Activated CD4-positive, alpha-beta T cell treated with anti-CD3 and anti-CD28 coated beads for 36 hours (primary cell): ENCODE measurements at regions of chr7 and their contacts with region 1.

Region 1: DNA sequence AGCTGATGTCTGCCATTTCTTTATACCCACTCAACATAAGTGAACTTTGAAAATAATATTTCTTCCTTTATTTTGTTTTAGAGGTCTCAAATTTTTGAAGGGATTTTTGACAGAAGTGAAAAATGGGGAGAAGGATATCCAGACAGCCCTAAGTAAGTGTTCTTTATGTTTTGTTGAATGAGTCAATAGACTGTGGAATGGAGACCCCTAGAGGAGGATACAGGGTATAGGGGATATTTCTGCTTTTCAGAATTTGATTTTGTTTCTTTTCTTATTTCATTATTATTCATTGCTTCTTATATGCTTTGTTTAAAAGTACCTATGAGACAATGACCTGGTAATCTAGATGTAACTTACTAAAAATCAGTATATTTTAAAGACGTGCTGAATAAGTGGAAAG is 34.4 kb downstream of the PLEKHA8 start:
- DNase-seq: no peak
- ATAC-seq: peak; percentile 53
- H3K4me3 Mint-ChIP-seq: no peak overlapping the region
- H3K27ac Mint-ChIP-seq: no peak overlapping the region
- H3K4me1 Mint-ChIP-seq: peaks cover 5% of the 10 kb centered on the region
- H3K27me3 Mint-ChIP-seq: no peaks in the 10 kb centered on the region

Region 2: GRCh38 chr7:29639881-29640595 is 422.6 kb before region 1 on chr7:
- CTCF ChIA-PET with region 1: no interaction called
- POLR2A ChIA-PET with region 1: no interaction called
- intact Hi-C with region 1: loop called in 1 of 2 experiments (anchors 2 kb)
- DNase-seq: no peak
- ATAC-seq: no peak
- H3K4me3 Mint-ChIP-seq: no peak overlapping the region
- H3K27ac Mint-ChIP-seq: no peak overlapping the region
- H3K4me1 Mint-ChIP-seq: no peaks in the 10 kb centered on the region
- H3K27me3 Mint-ChIP-seq: no peaks in the 10 kb centered on the region

Region 3: DNA sequence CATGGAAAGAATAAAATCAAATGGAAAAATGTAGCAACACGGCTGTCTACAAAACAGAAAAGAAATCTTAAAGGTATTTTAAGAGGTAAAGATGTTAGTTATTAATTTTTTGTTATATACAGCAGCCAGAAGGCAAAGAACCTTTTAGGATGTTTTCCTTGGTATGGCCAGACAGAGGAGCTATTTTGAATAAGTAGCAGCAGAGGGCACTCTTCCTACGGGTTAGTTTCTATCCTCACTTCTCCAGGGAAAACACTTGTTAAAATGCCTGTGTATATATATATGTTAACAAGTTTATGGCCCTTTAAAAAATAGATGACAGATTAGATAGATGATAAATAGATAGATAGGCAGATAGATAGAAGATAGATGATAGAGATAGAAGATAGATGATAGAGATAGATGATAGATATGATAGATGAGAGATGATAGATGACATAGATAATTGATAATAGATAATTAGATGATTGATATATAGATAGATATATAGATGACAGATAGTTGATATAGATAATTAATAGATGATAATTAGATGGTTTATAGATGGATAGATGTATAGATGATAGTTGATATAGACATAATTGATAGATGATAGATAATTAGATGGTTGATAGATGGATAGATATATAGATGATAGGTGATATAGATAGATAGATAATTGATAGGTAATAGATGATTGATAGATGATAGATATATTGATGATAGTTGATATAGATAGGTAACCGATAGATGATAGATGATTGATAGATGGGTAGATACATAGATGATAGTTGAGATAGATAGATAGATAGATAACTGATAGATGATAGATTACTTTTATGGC is 314.1 kb before region 1 on chr7:
- CTCF ChIA-PET with region 1: interaction called, 3 read pairs
- POLR2A ChIA-PET with region 1: no interaction called
- intact Hi-C with region 1: loop called in 1 of 2 experiments (anchors 1 kb)
- DNase-seq: no peak
- ATAC-seq: no peak
- H3K4me3 Mint-ChIP-seq: no peak overlapping the region
- H3K27ac Mint-ChIP-seq: no peak overlapping the region
- H3K4me1 Mint-ChIP-seq: no peaks in the 10 kb centered on the region
- H3K27me3 Mint-ChIP-seq: no peaks in the 10 kb centered on the region

Region 4: GRCh38 chr7:29854257-29854938 is 208.2 kb before region 1 on chr7:
- CTCF ChIA-PET with region 1: no interaction called
- POLR2A ChIA-PET with region 1: no interaction called
- intact Hi-C with region 1: no loop called
- DNase-seq: no peak
- ATAC-seq: no peak
- H3K4me3 Mint-ChIP-seq: no peak overlapping the region
- H3K27ac Mint-ChIP-seq: no peak overlapping the region
- H3K4me1 Mint-ChIP-seq: no peaks in the 10 kb centered on the region
- H3K27me3 Mint-ChIP-seq: peaks cover 4% of the 10 kb centered on the region

Region 5: GRCh38 chr7:29878081-29878688 is 184.4 kb before region 1 on chr7:
- CTCF ChIA-PET with region 1: interaction called, 4 read pairs
- POLR2A ChIA-PET with region 1: no interaction called
- intact Hi-C with region 1: loop called (anchors 1 to 5 kb)
- DNase-seq: peak; percentile 38
- ATAC-seq: no peak
- H3K4me3 Mint-ChIP-seq: no peak overlapping the region
- H3K27ac Mint-ChIP-seq: no peak overlapping the region
- H3K4me1 Mint-ChIP-seq: peaks cover 5% of the 10 kb centered on the region
- H3K27me3 Mint-ChIP-seq: peaks cover 5% of the 10 kb centered on the region